Heart right ventricle (tissue), 16 donors: ENCODE measurements at regions of chr1 and their contacts with region 1.

Region 1: GRCh38 chr1:242467556-242468145 is 56.8 kb downstream of the PLD5 start:
- DNase-seq: peak in 1 of 2 donors; percentile 48
- ATAC-seq: peak in 7 of 8 donors; percentile 58 to 86 (median 75)
- H3K4me3 ChIP-seq: no peak overlapping the region
- H3K27ac ChIP-seq: peak overlapping the region in 1 of 10 donors; percentile 12
- H3K4me1 ChIP-seq: no peaks in the 10 kb centered on the region
- H3K27me3 ChIP-seq: no peaks in the 10 kb centered on the region
- CTCF ChIP-seq: peak; percentile 33 to 75 (median 62)

Region 2: DNA sequence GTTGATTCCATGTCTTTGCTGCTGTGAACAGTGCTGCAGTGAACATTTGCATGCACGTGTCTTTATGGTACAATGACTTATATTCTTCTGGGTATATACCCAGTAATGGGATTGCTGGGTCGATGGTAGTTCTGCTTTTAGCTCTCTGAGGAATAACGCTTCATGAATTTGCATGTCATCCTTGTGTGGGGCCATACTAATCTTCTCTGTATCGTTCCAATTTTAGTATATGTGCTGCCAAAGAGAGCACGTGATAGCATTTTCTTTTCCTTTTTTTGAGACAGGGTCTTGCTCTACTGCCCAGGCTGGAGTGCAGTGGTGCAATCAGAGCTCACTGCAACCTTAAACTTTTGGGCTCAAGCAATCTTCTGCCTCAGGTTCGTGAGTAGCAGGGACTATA is 443.8 kb before region 1 on chr1:
- intact Hi-C with region 1: loop called in 1 of 10 experiments (anchors 5 kb)
- DNase-seq: no peak
- ATAC-seq: no peak
- H3K4me3 ChIP-seq: no peak overlapping the region
- H3K27ac ChIP-seq: no peak overlapping the region
- H3K4me1 ChIP-seq: no peaks in the 10 kb centered on the region
- H3K27me3 ChIP-seq: peaks cover 0 to 9% (median 0%) of the 10 kb centered on the region in 7 donors
- CTCF ChIP-seq: no peak

Region 3: DNA sequence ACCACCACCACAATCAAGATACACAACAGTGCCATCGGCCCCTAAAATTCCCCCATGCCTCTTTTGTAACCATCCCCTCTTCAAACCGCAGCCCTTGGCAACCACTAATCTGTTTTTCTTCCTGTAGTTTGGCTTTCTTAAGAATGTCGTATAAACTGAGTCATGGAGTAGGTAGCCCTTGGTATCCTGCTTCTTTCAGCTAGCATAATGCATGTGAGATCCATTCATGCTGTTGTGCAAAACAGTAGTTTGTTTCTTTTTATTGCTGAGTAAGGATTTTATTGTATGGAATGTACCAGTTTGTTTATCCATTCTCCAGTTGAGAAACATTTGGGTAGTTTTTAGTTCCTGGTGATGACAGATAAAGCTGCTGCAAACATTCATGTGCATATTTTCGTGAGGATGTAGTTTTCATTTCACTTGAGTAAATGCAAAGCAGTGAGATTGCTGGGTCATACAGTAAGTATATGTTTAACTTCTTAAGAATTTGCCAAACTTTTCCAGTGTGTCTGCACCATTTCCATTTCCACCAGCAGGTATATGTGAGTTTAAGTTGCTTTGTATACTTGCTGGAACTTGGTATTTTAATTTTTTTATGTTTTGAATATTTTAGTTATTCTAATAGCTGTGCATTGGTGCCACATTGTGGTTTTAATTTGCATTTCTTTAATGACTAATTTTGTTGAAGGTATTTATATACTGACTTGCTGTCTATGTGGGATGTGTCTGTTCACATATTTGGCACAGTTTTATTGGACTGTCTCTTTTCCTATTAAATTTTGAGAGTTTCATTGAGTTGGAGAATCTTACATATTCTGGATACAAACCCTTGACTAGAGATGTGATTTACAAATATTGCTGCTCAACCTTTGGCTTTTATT is 320.3 kb before region 1 on chr1:
- intact Hi-C with region 1: no loop called
- DNase-seq: no peak
- ATAC-seq: no peak
- H3K4me3 ChIP-seq: peak overlapping the region in 4 of 10 donors; percentile 2 to 13 (median 12)
- H3K27ac ChIP-seq: no peak overlapping the region
- H3K4me1 ChIP-seq: no peaks in the 10 kb centered on the region
- H3K27me3 ChIP-seq: no peaks in the 10 kb centered on the region
- CTCF ChIP-seq: no peak

Region 4: GRCh38 chr1:242386227-242386626 is 81.4 kb before region 1 on chr1:
- intact Hi-C with region 1: no loop called
- DNase-seq: no peak
- ATAC-seq: no peak
- H3K4me3 ChIP-seq: no peak overlapping the region
- H3K27ac ChIP-seq: no peak overlapping the region
- H3K4me1 ChIP-seq: no peaks in the 10 kb centered on the region
- H3K27me3 ChIP-seq: no peaks in the 10 kb centered on the region
- CTCF ChIP-seq: no peak

Region 5: DNA sequence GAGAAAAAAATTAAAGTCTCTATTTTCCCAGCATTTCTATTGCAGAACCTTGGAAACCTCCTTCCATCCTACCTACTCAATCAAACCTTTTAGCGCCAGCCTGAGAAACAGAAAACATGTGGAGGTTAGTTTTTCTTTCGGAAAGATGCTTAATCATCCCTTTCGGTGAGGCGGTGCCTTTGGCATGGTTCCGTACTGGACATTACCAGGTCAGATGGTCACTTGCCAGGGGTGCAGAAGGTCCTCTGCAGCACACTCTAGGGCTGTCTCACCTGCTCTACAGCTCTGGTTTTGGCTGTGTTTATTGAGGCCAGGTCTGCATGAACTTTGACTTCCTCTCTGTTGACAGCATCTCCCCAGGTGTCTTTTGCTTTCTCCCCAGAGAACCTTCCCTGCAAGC is 64.7 kb before region 1 on chr1:
- intact Hi-C with region 1: no loop called
- DNase-seq: no peak
- ATAC-seq: no peak
- H3K4me3 ChIP-seq: no peak overlapping the region
- H3K27ac ChIP-seq: no peak overlapping the region
- H3K4me1 ChIP-seq: no peaks in the 10 kb centered on the region
- H3K27me3 ChIP-seq: no peaks in the 10 kb centered on the region
- CTCF ChIP-seq: no peak

Region 6: GRCh38 chr1:243325305-243325890 is 857.7 kb after region 1 on chr1:
- intact Hi-C with region 1: loop called in 6 of 10 experiments (anchors 5 to 10 kb)
- DNase-seq: no peak
- ATAC-seq: peak in 1 of 8 donors; percentile 39
- H3K4me3 ChIP-seq: no peak overlapping the region
- H3K27ac ChIP-seq: no peak overlapping the region
- H3K4me1 ChIP-seq: peaks cover 0 to 6% (median 0%) of the 10 kb centered on the region in 9 donors
- H3K27me3 ChIP-seq: no peaks in the 10 kb centered on the region
- CTCF ChIP-seq: peak; percentile 58 to 89 (median 80)